Left cardiac atrium (tissue), 4 donors: ENCODE measurements at regions of chr12 and their contacts with region 1.

Region 1: GRCh38 chr12:3202734-3203446 is 125.7 kb downstream of the TSPAN9 start:
- DNase-seq: no peak
- ATAC-seq: peak in 1 of 2 donors; percentile 14

Region 2: GRCh38 chr12:2864198-2864597 is 338.7 kb before region 1 on chr12:
- intact Hi-C with region 1: no loop called
- DNase-seq: no peak
- ATAC-seq: no peak

Region 3: GRCh38 chr12:3135522-3136461 is 67.1 kb before region 1 on chr12:
- intact Hi-C with region 1: loop called (anchors 5 to 10 kb)
- DNase-seq: no peak
- ATAC-seq: peak; percentile 28 to 32

Region 4: DNA sequence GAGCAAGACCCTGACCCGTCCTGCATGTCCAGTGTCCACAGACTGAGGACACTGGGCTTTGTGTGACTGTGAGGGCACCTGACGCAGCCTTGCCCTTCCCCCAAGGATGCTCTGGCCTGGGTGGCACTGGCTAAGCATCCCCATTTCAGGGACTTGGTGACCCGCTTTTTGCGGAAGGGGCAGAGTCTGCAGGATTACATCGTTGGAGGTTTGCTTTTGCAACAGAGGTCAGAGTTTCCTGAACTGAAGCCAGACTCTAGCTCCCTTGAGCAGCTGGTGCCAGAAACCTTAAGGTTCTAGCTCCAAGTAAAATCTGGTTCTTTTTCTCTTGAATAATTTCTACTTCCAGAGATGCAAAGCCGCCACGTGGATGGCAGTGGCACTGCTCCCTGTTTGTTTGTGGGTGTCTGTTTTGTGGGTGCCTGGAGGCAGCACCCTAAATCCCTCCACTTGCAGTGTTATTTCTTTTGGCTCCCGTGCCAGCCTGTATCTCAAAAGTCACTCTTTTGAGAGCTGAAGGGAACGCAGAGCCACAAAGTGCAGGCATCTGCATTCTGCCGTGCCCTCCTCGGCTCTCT is 59.0 kb after region 1 on chr12:
- intact Hi-C with region 1: loop called in 1 of 2 experiments (anchors 5 kb)
- DNase-seq: no peak
- ATAC-seq: no peak

Region 5: GRCh38 chr12:3275171-3276041 is 72.5 kb after region 1 on chr12:
- intact Hi-C with region 1: loop called in 1 of 2 experiments (anchors 10 kb)
- DNase-seq: peak; percentile 78
- ATAC-seq: peak; percentile 61 to 68